Mucosa of descending colon (tissue), 3 donors: ENCODE measurements at regions of chr5 and their contacts with region 1.

Region 1: DNA sequence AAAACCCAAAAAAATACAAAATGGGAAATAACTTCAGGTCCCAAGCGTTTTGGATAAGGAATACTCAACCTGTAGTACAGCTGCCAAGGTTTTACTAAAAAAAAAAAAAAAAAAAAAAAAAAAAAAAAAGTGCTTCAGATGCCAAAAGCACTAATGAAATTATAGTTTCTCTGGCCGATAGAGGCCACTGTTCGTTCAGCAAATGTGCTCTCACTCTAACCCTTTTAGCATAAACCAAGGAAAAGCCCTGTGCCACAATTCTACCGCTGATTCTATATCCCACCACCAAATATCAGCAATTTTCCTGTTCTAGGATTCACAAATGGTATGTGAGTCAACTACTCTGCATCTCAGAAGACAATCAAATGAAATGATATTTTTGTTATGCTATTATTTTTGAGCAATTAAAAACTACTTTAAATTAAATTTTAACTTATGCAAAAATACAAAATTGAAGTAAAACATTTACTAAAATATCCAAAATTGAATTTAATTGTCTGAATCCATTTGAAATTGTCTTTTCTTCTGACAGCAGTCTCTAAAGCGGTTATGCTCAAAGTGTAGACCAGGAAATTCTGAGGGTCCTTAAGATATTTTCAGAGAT is 79.8 kb downstream of the RICTOR start:
- DNase-seq: peak in 1 of 3 donors; percentile 62
- ATAC-seq: peak; percentile 68
- H3K4me3 ChIP-seq: no peak overlapping the region
- H3K4me1 ChIP-seq: no peaks in the 10 kb centered on the region
- CTCF ChIP-seq: peak; percentile 15

Region 2: GRCh38 chr5:38835887-38836286 is 158.5 kb before region 1 on chr5:
- intact Hi-C with region 1: no loop called
- DNase-seq: no peak
- ATAC-seq: no peak
- H3K4me3 ChIP-seq: no peak overlapping the region
- H3K4me1 ChIP-seq: no peaks in the 10 kb centered on the region
- CTCF ChIP-seq: no peak

Region 3: DNA sequence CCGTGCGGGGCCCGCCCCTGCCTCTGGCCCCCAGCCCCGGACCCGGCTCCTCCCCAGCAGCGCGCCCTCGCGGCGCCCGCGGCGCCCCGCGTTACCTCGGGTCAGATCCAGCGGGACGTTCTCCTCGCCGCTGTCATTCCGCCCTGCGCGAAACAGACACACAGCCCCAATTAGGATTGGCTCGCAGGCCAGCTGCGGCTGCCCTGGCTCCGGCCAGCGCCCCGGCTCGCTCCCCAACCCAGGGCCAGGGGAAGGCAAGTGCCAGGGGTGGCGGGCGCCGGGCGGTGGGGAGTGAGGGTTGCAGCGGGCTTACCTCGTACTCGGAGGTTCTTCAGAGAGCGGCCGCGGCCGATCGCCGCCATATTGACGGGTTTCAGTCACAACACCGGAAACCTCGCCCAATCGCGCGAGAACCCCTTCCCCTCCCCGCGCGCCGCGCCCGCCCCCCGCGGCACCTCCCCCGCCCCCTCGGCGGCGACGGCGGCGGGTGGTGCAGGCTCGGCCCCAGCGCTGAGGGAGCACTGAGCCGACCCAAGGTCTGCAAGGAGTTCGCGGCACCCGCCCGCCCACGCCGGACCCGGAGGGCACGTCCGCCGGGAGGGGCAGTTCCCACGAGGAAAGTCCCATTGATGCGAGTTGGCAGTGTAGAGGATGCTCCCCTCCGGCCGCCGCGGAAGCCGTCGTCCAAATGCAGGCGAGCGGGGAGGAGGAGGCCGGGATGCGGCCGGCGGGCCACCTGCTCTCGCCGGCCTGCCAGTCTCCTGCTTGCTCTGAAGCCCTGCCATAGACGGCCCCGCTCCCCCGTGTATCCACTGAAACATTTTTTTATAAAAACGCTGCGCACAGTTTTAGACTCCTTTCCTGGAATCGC is 79.8 kb after region 1 on chr5 and contains the start of gene RICTOR:
- intact Hi-C with region 1: loop called in 1 of 2 experiments (anchors 10 kb)
- DNase-seq: peak; percentile 94 to 95 (median 95)
- ATAC-seq: peak; percentile 94
- H3K4me3 ChIP-seq: peak within 1 kb of the TSS; percentile 83
- H3K4me1 ChIP-seq: peaks cover 5% of the 10 kb centered on the region
- CTCF ChIP-seq: no peak
- total RNA-seq, gene RICTOR: 24.3 to 41.9 (median 36.5) TPM